ENCODE measurements at regions of chr19 and their contacts with region 1.

Region 1: DNA sequence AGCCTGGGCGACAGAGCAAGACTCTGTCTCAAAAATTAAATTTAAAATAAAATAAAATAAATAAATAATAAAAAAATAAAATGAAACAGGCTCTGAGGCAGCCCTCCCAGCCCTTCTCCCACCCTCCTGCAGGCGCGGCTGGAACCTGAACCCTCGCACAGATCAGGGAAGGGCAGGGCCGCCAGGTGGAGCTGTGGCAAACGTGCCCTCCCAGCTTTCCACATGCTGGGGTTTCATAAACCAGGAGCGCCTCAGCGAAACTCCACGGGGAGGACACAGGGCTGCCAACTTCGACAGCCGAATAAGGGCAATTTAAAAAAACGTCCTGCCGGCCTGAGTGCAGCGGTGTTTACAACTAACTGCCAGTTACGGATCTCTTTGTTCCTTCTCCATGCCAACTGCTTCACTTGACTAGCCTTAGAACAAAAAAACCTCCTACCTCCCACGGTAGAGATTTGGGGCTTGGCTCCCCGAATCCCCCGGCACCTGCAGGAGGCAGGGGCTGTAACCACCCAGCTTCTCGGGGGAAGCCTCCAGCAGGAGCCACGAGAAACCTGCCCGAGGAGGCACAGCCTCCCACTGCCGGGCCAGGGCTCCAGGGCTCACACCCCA is 15.9 kb downstream of the ZNF787 start:
- DNase-seq: no peak
- H3K4me3 ChIP-seq: no peak overlapping the region
- H3K27ac ChIP-seq: peak overlapping the region; percentile 63
- H3K4me1 ChIP-seq: peaks cover 57% of the 10 kb centered on the region
- H3K27me3 ChIP-seq: no peaks in the 10 kb centered on the region
- CTCF ChIP-seq: peak; percentile 30 to 58 (median 43)
- POLR2A ChIP-seq: no peak

Region 2: DNA sequence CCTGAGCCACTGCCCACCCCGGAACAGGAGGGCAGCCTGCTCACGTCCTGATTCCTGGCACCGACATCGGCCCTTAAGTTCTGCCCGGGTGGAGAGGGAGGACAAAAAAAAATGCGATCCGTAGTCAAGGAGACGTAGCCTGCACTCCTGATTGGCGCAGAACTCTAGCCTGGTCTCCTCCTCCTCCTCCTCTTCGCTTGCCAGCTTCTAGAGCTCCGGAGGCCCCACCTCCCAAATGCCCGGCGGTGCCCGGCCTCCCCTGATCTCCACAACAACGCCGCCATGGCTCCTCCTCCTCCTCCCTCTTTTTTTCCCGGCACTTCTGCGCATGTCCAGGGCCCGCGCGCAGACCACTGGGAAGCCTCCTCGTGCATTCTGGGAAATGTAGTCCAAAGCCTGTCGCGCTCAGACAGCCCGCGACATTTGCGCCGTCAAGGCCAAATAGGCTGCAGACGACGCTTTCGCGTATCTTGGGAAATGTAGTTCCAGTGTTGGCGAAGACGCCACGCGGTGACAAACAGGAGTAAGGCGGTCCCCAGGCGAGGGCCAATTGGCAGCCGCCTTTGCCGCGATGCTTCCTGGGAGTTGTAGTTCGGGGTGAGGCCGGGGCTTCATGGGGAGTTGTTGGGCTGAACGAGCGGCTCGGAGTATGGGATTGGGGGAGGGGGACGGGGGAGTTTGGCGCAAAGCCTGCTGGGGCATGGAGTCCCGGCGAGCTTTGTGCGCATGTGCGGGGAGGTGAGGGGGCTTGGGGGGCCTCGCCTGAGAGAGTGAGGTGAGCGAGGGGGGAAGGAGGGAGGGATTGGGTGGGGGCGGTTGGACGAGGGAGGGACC is 35.6 kb after region 1 on chr19 and contains the start of gene ZNF444:
- intact Hi-C with region 1: loop called (anchors 5 kb)
- DNase-seq: peak; percentile 99 to 100
- H3K4me3 ChIP-seq: peak within 1 kb of the TSS; percentile 57 to 76
- H3K27ac ChIP-seq: peak within 1 kb of the TSS; percentile 88
- H3K4me1 ChIP-seq: peaks cover 27% of the 10 kb centered on the region
- H3K27me3 ChIP-seq: no peaks in the 10 kb centered on the region
- CTCF ChIP-seq: no peak
- POLR2A ChIP-seq: peak in 1 of 2 donors; percentile 29
- total RNA-seq, gene ZNF444: 28.7 TPM